Naive thymus-derived CD4-positive, alpha-beta T cell (primary cell): ENCODE measurements at regions of chr22 and their contacts with region 1.

Region 1: DNA sequence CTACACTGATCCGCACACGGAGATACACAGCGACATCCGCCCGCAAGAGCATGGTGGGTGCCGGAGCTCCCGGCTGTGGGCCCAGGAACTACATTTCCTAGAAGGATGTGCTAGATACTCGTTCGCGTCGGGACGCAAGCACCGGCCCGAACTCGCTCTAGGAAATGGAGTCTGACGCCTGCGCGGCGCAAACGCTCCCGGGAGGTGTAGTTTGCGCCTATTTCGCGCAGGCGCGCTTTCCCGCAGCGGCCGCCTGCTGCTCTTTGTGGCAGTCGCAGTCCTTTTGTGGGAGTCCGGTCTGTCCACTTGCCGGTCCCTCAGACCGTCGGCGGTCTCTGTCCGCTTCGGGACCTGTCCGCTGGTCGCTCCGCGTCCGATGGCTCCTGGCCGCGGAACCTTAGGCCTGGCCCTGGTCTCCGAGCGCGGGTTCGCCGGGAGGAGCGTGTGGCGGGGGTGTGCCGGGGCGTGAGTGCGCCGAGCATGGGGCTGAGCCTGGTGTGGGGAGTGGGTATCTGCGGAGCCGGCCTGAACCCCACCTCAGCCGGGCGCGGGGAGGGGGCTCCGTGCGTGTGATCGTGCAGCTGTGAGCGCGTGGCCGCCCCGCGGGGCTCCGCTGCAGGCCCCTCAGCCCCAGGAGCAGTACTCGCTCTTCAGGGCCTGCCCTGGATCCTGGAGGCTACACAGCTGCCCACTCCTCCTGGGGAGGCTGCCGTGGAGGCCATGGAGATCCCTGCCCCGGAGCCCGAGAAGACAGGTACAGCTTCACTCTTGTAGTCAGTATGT is at the start of gene ZNF74:
- DNase-seq: peak; percentile 69 to 90 (median 86)
- ATAC-seq: peak; percentile 98
- H3K4me3 ChIP-seq: peak within 1 kb of the TSS; percentile 71
- H3K4me3 Mint-ChIP-seq: peak within 1 kb of the TSS; percentile 83 to 93 (median 91)
- H3K27ac ChIP-seq: peak within 1 kb of the TSS; percentile 73
- H3K27ac Mint-ChIP-seq: peak within 1 kb of the TSS; percentile 86 to 98 (median 92)
- H3K4me1 ChIP-seq: peaks cover 14 to 17% of the 10 kb centered on the region in 2 donors
- H3K4me1 Mint-ChIP-seq: peaks cover 23 to 52% (median 45%) of the 10 kb centered on the region in 7 donors
- H3K27me3 ChIP-seq: no peaks in the 10 kb centered on the region
- H3K27me3 Mint-ChIP-seq: no peaks in the 10 kb centered on the region
- total RNA-seq, gene ZNF74: 6.1 to 18.2 (median 12.9) TPM

Region 2: DNA sequence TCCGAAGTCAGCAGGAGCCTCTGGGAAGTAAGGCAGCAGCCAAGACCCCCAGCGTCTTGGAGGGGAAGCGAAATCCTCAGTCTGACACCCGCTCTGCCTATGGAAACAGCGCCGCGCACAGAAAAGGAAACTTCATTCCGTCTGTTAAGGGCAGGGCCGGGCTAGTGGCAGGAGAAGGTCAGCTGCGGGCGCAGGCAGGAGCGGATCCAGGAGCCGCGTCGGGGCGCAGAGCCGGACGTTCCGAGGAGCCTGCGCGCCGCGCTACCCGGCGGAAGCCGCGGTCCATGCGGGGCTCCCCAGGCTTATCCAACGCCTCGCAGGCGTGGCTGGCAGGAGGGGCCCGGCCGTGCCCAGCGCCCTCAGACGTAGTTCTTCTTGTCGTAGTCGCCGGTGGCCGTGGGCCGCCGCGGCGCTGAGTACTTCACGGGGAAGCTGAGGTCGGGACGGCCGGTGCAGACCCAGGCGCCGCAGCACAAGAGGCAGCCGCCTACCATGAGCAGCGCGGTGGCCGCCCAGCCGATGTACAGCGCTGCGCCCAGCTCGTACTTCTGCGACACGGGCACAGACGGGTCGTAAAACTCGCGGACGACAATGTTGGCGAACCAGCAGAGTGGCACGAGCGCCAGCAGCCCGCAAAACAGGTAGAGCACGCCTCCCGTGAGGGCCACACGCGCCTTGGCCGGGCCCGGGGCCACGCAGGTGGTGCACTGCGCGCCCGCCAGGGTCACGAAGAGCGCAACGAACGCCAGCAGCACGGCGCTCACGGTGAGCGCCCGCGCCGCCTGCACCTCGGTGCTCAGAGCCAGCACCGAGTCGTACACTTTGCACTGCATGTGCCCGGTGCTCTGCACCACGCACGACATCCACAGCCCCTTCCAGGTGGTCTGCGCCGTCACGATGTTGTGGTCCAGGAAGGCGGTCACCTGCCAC is 870.6 kb before region 1 on chr22:
- CTCF ChIA-PET with region 1: no interaction called
- POLR2A ChIA-PET with region 1: no interaction called
- intact Hi-C with region 1: no loop called
- DNase-seq: peak in 6 of 9 donors; percentile 23 to 54 (median 33)
- ATAC-seq: peak; percentile 75
- H3K4me3 ChIP-seq: peak overlapping the region; percentile 50
- H3K4me3 Mint-ChIP-seq: peak overlapping the region; percentile 64 to 87 (median 77)
- H3K27ac ChIP-seq: no peak overlapping the region
- H3K27ac Mint-ChIP-seq: peak overlapping the region in 3 of 9 donors; percentile 38 to 64 (median 53)
- H3K4me1 ChIP-seq: no peaks in the 10 kb centered on the region
- H3K4me1 Mint-ChIP-seq: peaks cover 0 to 16% (median 10%) of the 10 kb centered on the region in 7 donors
- H3K27me3 ChIP-seq: no peaks in the 10 kb centered on the region
- H3K27me3 Mint-ChIP-seq: peaks cover 12 to 32% (median 13%) of the 10 kb centered on the region in 5 donors

Region 3: GRCh38 chr22:20205964-20206708 is 188.0 kb before region 1 on chr22:
- CTCF ChIA-PET with region 1: no interaction called
- POLR2A ChIA-PET with region 1: no interaction called
- intact Hi-C with region 1: no loop called
- DNase-seq: peak; percentile 35 to 75 (median 63)
- ATAC-seq: peak; percentile 91
- H3K4me3 ChIP-seq: peak overlapping the region; percentile 96
- H3K4me3 Mint-ChIP-seq: peak overlapping the region; percentile 85 to 98 (median 94)
- H3K27ac ChIP-seq: peak overlapping the region; percentile 83
- H3K27ac Mint-ChIP-seq: peak overlapping the region; percentile 91 to 97 (median 94)
- H3K4me1 ChIP-seq: peaks cover 16 to 24% of the 10 kb centered on the region in 2 donors
- H3K4me1 Mint-ChIP-seq: peaks cover 12 to 36% (median 25%) of the 10 kb centered on the region in 7 donors
- H3K27me3 ChIP-seq: no peaks in the 10 kb centered on the region
- H3K27me3 Mint-ChIP-seq: no peaks in the 10 kb centered on the region

Region 4: DNA sequence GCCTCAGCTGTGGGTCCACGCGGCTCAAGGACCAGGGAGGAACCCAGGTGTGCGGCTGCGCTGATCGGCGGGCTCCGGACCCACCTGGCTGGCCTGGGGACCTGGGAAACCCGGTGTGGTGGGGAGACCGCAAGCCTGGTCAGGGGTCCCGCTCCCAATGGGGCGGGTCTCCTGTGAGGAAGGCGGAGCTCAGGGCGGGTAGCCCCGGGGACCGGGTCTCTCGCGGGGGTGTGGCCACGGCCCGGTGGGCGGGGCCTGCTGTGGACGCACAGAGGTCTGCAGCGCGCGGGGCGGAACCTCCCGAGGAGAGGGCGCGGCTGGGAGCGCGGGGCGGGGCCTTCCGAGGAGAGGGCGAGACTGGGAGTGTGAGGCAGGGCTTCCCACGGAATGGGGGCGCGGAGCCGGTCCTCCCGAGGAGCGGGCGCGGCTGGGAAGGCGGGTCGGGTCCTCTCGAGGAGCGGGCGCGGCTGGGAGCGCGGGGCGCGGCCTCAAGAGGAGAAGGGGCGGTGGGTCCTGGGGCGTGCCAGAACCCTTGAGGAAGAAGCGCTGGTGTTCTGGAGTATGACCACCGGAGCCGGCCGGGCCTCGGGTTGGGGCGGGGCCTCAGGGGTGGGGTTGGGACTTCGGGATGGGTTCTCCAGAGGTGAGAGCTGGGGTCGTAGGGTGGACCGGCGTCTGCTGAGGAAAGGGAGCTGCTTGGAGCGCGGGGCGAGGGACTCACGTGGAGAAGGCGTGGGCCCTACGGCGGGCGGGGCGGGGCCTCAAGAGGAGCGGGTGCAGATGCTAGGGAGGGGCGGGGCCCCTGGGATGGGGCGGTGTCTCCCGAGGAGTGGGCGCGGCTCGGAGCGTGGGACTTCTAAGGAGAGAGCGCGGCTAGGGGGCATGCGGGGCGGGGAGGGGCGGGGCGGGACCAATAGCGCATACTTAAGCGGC is 95.0 kb before region 1 on chr22:
- CTCF ChIA-PET with region 1: no interaction called
- POLR2A ChIA-PET with region 1: no interaction called
- intact Hi-C with region 1: loop called (anchors 1 to 2 kb)
- DNase-seq: peak; percentile 80 to 93 (median 92)
- ATAC-seq: peak; percentile 96
- H3K4me3 ChIP-seq: peak overlapping the region; percentile 52
- H3K4me3 Mint-ChIP-seq: peak overlapping the region; percentile 72 to 89 (median 82)
- H3K27ac ChIP-seq: peak overlapping the region; percentile 60
- H3K27ac Mint-ChIP-seq: peak overlapping the region in 6 of 9 donors; percentile 36 to 79 (median 62)
- H3K4me1 ChIP-seq: peaks cover 0 to 3% of the 10 kb centered on the region in 2 donors
- H3K4me1 Mint-ChIP-seq: peaks cover 4 to 11% (median 9%) of the 10 kb centered on the region in 7 donors
- H3K27me3 ChIP-seq: no peaks in the 10 kb centered on the region
- H3K27me3 Mint-ChIP-seq: peaks cover 0 to 27% (median 4%) of the 10 kb centered on the region in 5 donors

Region 5: GRCh38 chr22:20319745-20320658 is 74.1 kb before region 1 on chr22 and contains the start of gene DGCR6L:
- CTCF ChIA-PET with region 1: interaction called, 3 read pairs
- POLR2A ChIA-PET with region 1: interaction called, 15 read pairs
- intact Hi-C with region 1: loop called in 1 of 2 experiments (anchors 2 kb)
- DNase-seq: peak; percentile 92 to 98 (median 95)
- ATAC-seq: peak; percentile 96
- H3K4me3 ChIP-seq: peak within 1 kb of the TSS; percentile 91
- H3K4me3 Mint-ChIP-seq: peak within 1 kb of the TSS; percentile 83 to 98 (median 92)
- H3K27ac ChIP-seq: peak within 1 kb of the TSS; percentile 89
- H3K27ac Mint-ChIP-seq: peak within 1 kb of the TSS; percentile 76 to 95 (median 89)
- H3K4me1 ChIP-seq: peaks cover 20 to 53% of the 10 kb centered on the region in 2 donors
- H3K4me1 Mint-ChIP-seq: peaks cover 28 to 70% (median 58%) of the 10 kb centered on the region in 7 donors
- H3K27me3 ChIP-seq: no peaks in the 10 kb centered on the region
- H3K27me3 Mint-ChIP-seq: no peaks in the 10 kb centered on the region
- total RNA-seq, gene DGCR6L: 29.4 to 55.3 (median 43.7) TPM

Region 6: GRCh38 chr22:20407829-20408228 is 13.7 kb after region 1 on chr22:
- CTCF ChIA-PET with region 1: interaction called, 5 read pairs
- POLR2A ChIA-PET with region 1: interaction called, 6 read pairs
- intact Hi-C with region 1: loop called in 1 of 2 experiments (anchors 1 kb)
- DNase-seq: no peak
- ATAC-seq: no peak
- H3K4me3 ChIP-seq: no peak overlapping the region
- H3K4me3 Mint-ChIP-seq: no peak overlapping the region
- H3K27ac ChIP-seq: no peak overlapping the region
- H3K27ac Mint-ChIP-seq: no peak overlapping the region
- H3K4me1 ChIP-seq: peaks cover 0 to 13% of the 10 kb centered on the region in 2 donors
- H3K4me1 Mint-ChIP-seq: peaks cover 9 to 16% (median 12%) of the 10 kb centered on the region in 7 donors
- H3K27me3 ChIP-seq: no peaks in the 10 kb centered on the region
- H3K27me3 Mint-ChIP-seq: peaks cover 0 to 6% (median 0%) of the 10 kb centered on the region in 5 donors

Region 7: DNA sequence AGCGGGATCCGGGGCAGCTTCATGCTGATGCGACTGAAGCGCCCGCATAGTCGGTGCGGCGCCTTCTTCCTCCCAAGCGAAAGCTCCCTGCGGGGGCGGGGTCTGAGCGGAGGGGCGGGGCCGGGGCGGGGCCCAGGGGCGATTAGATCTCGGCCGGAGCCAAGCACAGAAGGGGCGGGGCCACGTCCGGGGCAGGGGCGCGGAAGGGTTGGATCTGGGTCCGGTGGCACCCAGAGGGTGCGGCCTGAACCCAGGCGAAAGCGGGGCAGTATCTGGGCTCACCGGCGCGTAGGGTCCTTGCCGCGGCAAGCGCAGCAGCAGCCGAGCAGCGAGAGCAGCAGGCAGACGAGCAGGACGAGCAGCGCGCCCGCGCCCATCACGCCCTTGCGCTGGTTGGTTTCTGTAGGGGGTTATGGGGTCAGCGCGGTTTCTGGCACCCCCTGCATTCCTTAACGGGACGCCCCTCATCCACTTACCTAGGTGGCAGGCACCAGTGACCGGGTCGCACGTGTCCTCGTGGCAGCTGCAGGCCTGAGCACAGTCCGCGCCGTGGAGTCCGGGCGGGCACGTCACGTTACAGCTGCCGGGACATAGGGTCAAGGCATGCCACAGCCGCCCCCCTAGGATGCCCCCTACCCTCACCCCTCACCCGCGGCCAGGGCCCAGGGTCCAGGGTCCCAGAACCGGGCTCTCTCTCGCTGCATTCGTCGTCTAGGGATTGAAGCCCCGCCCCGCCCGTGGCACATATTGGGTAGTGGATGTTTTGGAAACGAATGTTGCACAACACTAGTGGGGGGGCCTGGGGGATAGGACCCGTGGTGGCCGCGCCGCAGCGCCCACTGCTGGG is 35.4 kb after region 1 on chr22:
- CTCF ChIA-PET with region 1: no interaction called
- POLR2A ChIA-PET with region 1: no interaction called
- intact Hi-C with region 1: loop called in 1 of 2 experiments (anchors 1 kb)
- DNase-seq: peak; percentile 56 to 86 (median 75)
- ATAC-seq: peak; percentile 87
- H3K4me3 ChIP-seq: peak overlapping the region; percentile 79
- H3K4me3 Mint-ChIP-seq: peak overlapping the region; percentile 82 to 96 (median 86)
- H3K27ac ChIP-seq: no peak overlapping the region
- H3K27ac Mint-ChIP-seq: peak overlapping the region; percentile 11 to 80 (median 62)
- H3K4me1 ChIP-seq: peaks cover 17 to 26% of the 10 kb centered on the region in 2 donors
- H3K4me1 Mint-ChIP-seq: peaks cover 6 to 22% (median 13%) of the 10 kb centered on the region in 7 donors
- H3K27me3 ChIP-seq: peaks cover 0 to 12% of the 10 kb centered on the region in 2 donors
- H3K27me3 Mint-ChIP-seq: peaks cover 18 to 66% (median 22%) of the 10 kb centered on the region in 5 donors

Region 8: DNA sequence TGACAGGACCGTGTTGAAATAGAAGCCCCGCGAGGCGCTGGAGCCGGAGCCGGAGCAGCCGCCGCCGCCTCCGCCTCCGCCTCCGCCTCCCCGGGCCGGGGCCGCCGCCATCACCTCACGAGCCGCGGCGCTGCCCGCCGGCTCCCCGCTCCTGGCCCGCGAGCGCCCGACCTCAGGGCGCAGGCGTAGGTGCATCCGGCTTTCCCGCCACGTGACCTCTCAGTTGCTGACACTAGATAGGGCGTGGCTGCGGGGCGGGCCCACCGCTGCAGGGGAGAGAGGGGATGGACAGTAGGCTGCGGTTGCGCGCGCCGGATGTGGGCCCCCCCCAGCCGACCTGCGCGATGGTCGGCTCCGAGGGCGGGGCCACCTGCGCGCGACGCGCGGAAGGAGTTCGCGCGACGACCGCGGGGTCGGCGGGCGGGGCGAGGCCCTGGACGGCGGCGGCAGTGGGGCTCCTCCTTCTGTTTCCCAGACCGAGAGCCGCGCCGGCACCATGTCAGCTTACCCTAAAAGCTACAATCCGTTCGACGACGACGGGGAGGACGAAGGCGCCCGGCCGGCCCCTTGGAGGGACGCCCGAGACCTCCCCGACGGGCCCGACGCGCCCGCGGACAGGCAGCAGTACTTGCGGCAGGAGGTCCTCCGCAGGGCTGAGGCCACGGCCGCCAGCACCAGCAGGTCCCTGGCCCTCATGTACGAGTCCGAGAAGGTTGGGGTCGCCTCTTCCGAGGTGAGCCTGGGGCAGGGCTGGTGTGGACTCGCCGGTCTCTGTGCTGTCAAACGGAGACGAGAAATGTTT is 464.7 kb after region 1 on chr22 and contains the starts of genes PI4KA and SNAP29:
- CTCF ChIA-PET with region 1: no interaction called
- POLR2A ChIA-PET with region 1: no interaction called
- intact Hi-C with region 1: loop called in 1 of 2 experiments (anchors 5 kb)
- DNase-seq: peak; percentile 92 to 98 (median 96)
- ATAC-seq: peak; percentile 97
- H3K4me3 ChIP-seq: peak within 1 kb of the TSS; percentile 78
- H3K4me3 Mint-ChIP-seq: peak within 1 kb of the TSS; percentile 87 to 95 (median 92)
- H3K27ac ChIP-seq: peak within 1 kb of the TSS; percentile 87
- H3K27ac Mint-ChIP-seq: peak within 1 kb of the TSS; percentile 60 to 92 (median 88)
- H3K4me1 ChIP-seq: peaks cover 17 to 20% of the 10 kb centered on the region in 2 donors
- H3K4me1 Mint-ChIP-seq: peaks cover 38 to 76% (median 58%) of the 10 kb centered on the region in 7 donors
- H3K27me3 ChIP-seq: no peaks in the 10 kb centered on the region
- H3K27me3 Mint-ChIP-seq: no peaks in the 10 kb centered on the region
- total RNA-seq, gene PI4KA: 120 to 181 (median 168) TPM
- total RNA-seq, gene SNAP29: 15.2 to 32.8 (median 25.4) TPM